CD4-positive, alpha-beta memory T cell (primary cell): ENCODE measurements at regions of chr4 and their contacts with region 1.

Region 1: DNA sequence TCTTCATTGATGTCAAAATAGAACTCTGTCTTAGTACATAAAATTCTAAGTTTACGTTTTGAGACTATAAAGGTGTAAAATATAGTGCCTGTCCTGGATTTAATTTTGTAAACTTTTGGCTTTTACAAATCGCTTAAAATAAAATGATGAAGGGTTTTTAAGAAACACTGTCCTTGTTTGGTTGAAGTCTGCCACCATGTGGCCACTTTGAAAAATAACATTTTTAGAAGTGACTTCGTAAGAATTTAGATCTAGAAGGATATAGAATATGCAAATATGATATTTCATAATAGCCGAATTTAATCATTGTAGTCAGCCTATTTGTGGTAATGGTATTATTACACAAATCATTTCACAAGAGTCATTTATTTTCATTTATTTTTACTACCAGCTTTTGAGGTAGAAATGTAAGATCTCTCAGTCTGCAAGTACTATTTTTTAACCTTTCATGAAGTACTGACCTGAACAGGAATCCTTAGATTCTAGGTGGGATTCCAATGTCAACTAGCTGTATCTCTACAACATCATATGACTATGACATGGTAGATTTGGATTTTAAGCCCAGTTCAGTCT is 31.0 kb upstream of the FAT4 start:
- DNase-seq: no peak
- H3K4me3 ChIP-seq: no peak overlapping the region
- H3K4me3 Mint-ChIP-seq: no peak overlapping the region
- H3K27ac ChIP-seq: no peak overlapping the region
- H3K27ac Mint-ChIP-seq: no peak overlapping the region
- H3K4me1 ChIP-seq: no peaks in the 10 kb centered on the region
- H3K4me1 Mint-ChIP-seq: no peaks in the 10 kb centered on the region
- H3K27me3 ChIP-seq: no peaks in the 10 kb centered on the region
- H3K27me3 Mint-ChIP-seq: no peaks in the 10 kb centered on the region

Region 2: DNA sequence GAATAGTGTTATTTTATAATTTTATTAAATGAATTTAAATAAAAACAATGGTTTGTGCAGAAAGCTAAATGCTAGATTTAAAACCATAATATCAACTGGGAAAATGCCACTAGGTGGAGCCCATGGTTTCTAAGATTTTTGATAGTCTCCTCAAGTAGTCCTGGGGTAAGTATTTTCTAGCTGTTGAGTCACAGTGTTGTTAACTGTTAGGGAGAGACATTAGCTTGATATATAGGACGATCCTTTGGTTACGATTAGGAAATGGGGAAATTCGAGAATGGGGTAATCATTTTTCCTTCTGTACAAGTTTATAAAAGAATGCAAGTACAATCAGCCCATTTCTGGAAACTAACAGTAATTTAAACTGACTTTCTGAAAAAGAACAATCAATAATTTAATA is 949.7 kb before region 1 on chr4:
- CTCF ChIA-PET with region 1: no interaction called
- POLR2A ChIA-PET with region 1: no interaction called
- intact Hi-C with region 1: loop called (anchors 2 kb)
- DNase-seq: no peak
- H3K4me3 ChIP-seq: no peak overlapping the region
- H3K4me3 Mint-ChIP-seq: no peak overlapping the region
- H3K27ac ChIP-seq: no peak overlapping the region
- H3K27ac Mint-ChIP-seq: no peak overlapping the region
- H3K4me1 ChIP-seq: no peaks in the 10 kb centered on the region
- H3K4me1 Mint-ChIP-seq: no peaks in the 10 kb centered on the region
- H3K27me3 ChIP-seq: no peaks in the 10 kb centered on the region
- H3K27me3 Mint-ChIP-seq: no peaks in the 10 kb centered on the region

Region 3: GRCh38 chr4:125168531-125168930 is 115.3 kb before region 1 on chr4:
- CTCF ChIA-PET with region 1: no interaction called
- POLR2A ChIA-PET with region 1: no interaction called
- intact Hi-C with region 1: no loop called
- DNase-seq: no peak
- H3K4me3 ChIP-seq: no peak overlapping the region
- H3K4me3 Mint-ChIP-seq: no peak overlapping the region
- H3K27ac ChIP-seq: no peak overlapping the region
- H3K27ac Mint-ChIP-seq: no peak overlapping the region
- H3K4me1 ChIP-seq: no peaks in the 10 kb centered on the region
- H3K4me1 Mint-ChIP-seq: no peaks in the 10 kb centered on the region
- H3K27me3 ChIP-seq: no peaks in the 10 kb centered on the region
- H3K27me3 Mint-ChIP-seq: no peaks in the 10 kb centered on the region

Region 4: DNA sequence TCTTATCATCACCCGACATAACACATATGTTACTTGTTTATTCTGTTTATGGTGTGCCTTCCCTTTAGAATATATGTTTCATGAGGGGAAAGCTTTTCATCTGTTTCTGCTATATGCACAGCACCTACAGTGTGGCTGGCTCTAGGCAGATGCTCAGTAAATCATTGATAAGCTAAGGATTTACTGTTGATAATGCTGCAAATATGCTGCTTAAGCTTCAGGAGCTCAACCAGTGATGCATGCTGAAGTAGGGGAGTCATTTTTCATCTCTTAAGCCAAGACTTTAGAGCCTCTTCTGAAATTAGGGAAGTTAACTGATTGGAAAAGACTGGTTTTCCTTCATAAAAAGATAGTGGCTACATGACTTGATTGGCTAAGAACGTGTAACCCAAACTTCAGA is 47.3 kb after region 1 on chr4:
- CTCF ChIA-PET with region 1: no interaction called
- POLR2A ChIA-PET with region 1: no interaction called
- intact Hi-C with region 1: no loop called
- DNase-seq: no peak
- H3K4me3 ChIP-seq: no peak overlapping the region
- H3K4me3 Mint-ChIP-seq: no peak overlapping the region
- H3K27ac ChIP-seq: no peak overlapping the region
- H3K27ac Mint-ChIP-seq: no peak overlapping the region
- H3K4me1 ChIP-seq: no peaks in the 10 kb centered on the region
- H3K4me1 Mint-ChIP-seq: no peaks in the 10 kb centered on the region
- H3K27me3 ChIP-seq: no peaks in the 10 kb centered on the region
- H3K27me3 Mint-ChIP-seq: no peaks in the 10 kb centered on the region